ENCODE measurements at regions of chr1 and their contacts with region 1.

Region 1: DNA sequence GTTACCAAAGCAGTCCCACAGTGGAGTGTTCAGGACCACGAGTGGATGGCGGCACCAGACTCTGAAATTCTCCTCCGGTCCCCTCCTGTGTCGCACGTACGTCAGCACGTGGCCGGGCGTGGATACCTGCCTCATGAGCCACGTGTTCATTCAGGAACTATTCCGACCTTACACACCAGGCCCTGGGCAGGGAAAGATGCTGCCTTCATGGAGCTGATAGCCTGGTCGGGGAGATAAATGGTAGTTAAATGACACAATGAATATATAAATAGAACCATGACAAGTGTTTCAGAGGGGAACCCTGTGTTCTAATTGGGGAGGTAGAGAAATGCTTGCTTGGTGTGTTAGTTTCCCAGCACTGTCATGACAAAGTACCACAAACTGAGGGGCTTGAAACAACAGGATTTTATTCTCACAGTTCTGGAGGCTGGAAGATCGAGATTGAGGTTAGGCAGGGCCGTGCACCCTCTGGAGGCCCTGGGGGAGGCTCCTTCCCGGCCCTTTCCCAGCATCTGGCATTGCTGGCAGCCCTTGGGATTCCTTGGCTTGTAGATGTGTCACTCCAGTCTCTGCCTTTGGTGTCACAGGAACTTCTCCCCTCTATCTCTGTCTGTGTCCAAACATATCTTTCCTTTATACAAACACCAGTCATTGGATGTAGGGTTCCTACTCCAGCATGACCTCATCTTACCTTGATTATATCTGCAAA is 28.9 kb upstream of the GPR137B start:
- DNase-seq: no peak
- H3K4me3 ChIP-seq: no peak overlapping the region
- H3K27ac ChIP-seq: no peak overlapping the region
- H3K4me1 ChIP-seq: no peaks in the 10 kb centered on the region
- H3K27me3 ChIP-seq: no peaks in the 10 kb centered on the region
- CTCF ChIP-seq: no peak

Region 2: DNA sequence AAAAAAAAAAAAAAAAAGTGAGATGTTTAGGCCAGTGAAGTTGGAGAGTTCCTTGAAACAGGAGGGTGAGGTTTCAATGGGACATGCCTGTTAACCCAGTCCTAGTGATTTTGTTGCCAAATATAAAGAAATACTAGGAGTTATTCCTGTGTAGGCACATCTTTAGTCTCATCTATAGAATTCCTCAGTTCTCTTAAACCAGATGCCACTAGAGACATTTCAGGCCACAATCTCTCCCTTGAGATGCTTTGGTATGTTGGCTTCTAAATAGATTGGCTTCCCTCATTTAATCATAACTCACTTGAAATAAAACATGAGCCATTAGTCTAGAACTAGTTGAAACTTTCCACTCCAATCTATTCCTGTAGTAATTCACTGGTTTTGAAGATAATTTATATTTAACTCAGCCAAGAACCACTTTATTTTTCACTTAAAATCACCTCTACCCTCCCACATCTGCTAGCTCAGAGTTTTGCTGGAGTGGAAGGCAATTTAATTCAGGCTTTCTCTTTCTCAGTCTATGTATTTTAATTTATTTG is 58.6 kb after region 1 on chr1:
- intact Hi-C with region 1: loop called (anchors 5 kb)
- DNase-seq: no peak
- H3K4me3 ChIP-seq: no peak overlapping the region
- H3K27ac ChIP-seq: no peak overlapping the region
- H3K4me1 ChIP-seq: no peaks in the 10 kb centered on the region
- H3K27me3 ChIP-seq: no peaks in the 10 kb centered on the region
- CTCF ChIP-seq: no peak

Region 3: DNA sequence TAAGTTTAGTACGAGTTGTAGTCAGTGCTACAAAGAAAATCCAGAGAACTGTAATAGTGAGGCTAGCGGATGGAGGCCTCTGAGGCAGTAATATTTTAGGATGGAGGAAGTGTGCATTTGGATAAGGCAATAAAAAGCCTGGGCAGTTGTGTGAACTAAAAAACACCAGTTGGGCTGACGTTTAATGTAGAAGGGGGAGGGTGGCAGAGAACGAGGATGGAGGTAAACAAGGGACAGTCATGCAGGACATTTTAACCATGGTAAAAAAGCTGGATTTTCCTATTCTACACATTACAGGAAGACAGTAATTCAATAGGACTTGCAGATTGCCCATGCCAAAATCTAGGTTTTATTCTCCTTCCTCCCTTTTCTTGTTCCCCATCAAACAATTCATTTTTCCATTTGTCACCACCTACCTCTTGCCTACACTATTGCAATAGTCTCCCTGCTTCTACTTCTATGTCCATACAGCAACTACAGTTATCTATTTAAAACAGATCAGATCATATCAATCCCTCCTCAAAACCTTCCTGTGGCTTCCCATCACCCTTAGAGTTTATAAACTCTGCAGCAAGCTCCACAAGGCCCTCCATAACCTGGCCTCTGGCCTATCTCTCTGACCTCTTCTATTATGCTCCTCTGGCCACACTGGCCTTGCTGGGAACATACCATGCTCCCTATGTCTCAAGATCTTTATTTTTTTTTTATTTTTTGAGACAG is 140.6 kb after region 1 on chr1:
- intact Hi-C with region 1: no loop called
- DNase-seq: no peak
- H3K4me3 ChIP-seq: no peak overlapping the region
- H3K27ac ChIP-seq: no peak overlapping the region
- H3K4me1 ChIP-seq: no peaks in the 10 kb centered on the region
- H3K27me3 ChIP-seq: no peaks in the 10 kb centered on the region
- CTCF ChIP-seq: no peak

Region 4: GRCh38 chr1:236489710-236490377 is 376.4 kb after region 1 on chr1:
- intact Hi-C with region 1: loop called (anchors 2 kb)
- DNase-seq: no peak
- H3K4me3 ChIP-seq: no peak overlapping the region
- H3K27ac ChIP-seq: no peak overlapping the region
- H3K4me1 ChIP-seq: no peaks in the 10 kb centered on the region
- H3K27me3 ChIP-seq: no peaks in the 10 kb centered on the region
- CTCF ChIP-seq: peak; percentile 59

Region 5: DNA sequence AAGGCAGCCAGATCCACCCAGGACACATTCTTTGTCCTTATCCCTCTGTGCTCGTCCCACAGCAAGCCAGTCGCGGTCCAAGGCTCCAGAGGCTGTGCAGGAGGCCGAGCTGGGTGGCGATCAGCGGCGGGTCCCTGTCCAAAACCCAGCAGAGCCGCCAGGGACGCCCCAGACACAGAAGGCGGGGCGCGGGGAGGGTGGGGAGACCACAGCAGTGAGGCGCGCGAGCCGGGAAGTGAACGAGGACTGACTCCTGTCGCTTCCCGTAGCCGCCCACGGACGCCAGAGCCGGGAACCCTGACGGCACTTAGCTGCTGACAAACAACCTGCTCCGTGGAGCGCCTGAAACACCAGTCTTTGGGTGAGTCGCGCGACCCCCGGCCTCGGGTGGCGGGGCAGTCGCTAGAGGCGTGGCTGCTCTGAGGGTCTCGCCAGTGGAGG is 410.2 kb after region 1 on chr1 and contains the start of gene LGALS8:
- intact Hi-C with region 1: no loop called
- DNase-seq: peak; percentile 91
- H3K4me3 ChIP-seq: peak within 1 kb of the TSS; percentile 91
- H3K27ac ChIP-seq: peak within 1 kb of the TSS; percentile 82
- H3K4me1 ChIP-seq: no peaks in the 10 kb centered on the region
- H3K27me3 ChIP-seq: no peaks in the 10 kb centered on the region
- CTCF ChIP-seq: no peak
- total RNA-seq, gene LGALS8: 33.5 to 58.4 TPM

Measured in colonic mucosa (tissue), 4 donors.